Tibial artery (tissue), 4 donors: ENCODE measurements at regions of chr2 and their contacts with region 1.

Region 1: DNA sequence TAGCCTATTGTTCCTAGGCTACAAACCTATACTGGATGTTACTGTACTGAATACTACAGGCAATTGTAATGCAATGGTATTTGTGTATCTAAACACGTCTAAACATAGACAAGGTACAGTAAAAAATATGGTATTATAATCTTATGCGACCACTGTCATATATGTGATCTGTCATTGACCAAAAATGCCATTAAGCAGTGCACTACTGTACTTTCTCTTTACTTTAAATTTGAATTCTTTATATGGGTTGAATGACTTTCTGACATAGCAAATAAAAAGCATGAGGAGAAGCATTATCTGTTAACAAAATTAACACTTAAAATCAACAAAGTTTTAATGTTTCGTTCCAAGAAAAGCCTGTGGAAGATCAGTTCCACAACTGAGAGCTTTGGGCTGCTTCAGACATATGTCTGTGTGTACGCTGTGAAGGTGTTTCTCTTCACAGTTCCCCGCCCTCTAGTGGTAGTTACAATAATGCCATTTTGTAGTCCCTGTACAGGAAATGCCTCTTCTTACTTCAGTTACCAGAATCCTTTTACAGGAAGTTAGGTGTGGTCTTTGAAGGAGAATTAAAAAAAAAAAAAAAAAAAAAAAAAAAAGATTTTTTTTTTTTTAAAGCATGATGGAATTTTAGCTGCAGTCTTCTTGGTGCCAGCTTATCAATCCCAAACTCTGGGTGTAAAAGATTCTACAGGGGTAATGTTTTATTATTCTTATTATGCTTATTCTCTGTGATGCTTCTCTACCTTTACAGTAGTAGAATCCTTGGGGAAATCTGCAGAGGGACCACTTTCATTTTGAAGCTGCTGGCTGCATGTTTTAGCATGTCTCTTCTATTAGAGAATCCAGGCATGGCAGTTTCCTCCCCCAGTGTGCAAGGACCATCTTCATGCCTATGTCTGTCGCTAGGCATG is 54.5 kb downstream of the SCN2A start:
- DNase-seq: no peak
- H3K4me3 ChIP-seq: no peak overlapping the region
- H3K27ac ChIP-seq: no peak overlapping the region
- H3K4me1 ChIP-seq: peaks cover 0 to 5% (median 0%) of the 10 kb centered on the region in 4 donors
- H3K27me3 ChIP-seq: no peaks in the 10 kb centered on the region
- CTCF ChIP-seq: peak; percentile 62 to 65

Region 2: GRCh38 chr2:165239230-165239629 is 54.5 kb before region 1 on chr2 and contains the start of gene SCN2A:
- intact Hi-C with region 1: loop called (anchors 2 kb)
- DNase-seq: no peak
- H3K4me3 ChIP-seq: no peak within 1 kb of the TSS
- H3K27ac ChIP-seq: no peak within 1 kb of the TSS
- H3K4me1 ChIP-seq: no peaks in the 10 kb centered on the region
- H3K27me3 ChIP-seq: no peaks in the 10 kb centered on the region
- CTCF ChIP-seq: peak in 1 of 2 experiments; percentile 45

Region 3: GRCh38 chr2:165348441-165348840 is 54.7 kb after region 1 on chr2:
- intact Hi-C with region 1: no loop called
- DNase-seq: no peak
- H3K4me3 ChIP-seq: no peak overlapping the region
- H3K27ac ChIP-seq: no peak overlapping the region
- H3K4me1 ChIP-seq: no peaks in the 10 kb centered on the region
- H3K27me3 ChIP-seq: no peaks in the 10 kb centered on the region
- CTCF ChIP-seq: no peak

Region 4: DNA sequence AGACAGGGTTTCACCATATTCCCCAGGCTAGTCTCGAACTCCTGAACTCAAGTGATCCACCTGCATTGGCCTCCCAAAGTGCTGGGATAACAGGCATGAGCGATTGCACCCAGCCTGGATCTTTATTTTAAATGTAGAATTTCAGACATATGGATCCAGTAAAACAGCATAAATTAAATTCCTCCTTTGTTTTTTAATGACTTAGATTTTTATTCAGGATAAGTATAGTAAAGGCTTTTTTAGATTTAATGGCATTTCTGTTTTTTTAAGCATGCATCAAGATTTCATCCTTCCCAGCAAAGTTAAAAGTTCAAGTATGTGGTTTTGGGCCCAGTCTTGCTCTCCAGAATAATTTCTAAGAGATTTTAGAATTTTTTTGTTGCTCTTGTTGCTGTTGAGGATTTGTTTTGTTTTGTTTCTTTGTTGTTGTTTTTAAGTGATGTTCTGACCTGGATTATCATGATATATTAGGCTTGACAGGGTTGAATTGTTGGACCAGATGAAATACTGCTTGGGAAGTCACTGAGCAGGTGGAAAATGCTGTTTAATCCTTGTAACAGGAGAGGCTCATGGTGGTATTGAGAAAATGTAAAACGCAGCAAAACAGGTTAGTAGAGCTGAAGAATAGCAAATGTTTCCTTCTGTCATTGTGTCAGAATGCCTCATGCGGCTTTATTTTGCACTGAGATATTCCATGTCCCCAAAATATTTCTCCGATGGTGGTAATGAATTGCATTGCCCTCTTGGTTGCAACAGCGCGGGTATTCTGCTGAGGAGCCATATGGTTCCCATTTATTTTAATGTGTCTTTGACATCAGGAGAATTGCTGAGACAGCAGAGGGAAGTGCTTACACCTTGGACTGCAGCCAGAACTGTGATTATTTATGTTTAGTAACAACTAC is 352.5 kb after region 1 on chr2:
- intact Hi-C with region 1: no loop called
- DNase-seq: no peak
- H3K4me3 ChIP-seq: no peak overlapping the region
- H3K27ac ChIP-seq: no peak overlapping the region
- H3K4me1 ChIP-seq: no peaks in the 10 kb centered on the region
- H3K27me3 ChIP-seq: no peaks in the 10 kb centered on the region
- CTCF ChIP-seq: no peak